ENCODE measurements at regions of chr19 and their contacts with region 1.

Region 1: GRCh38 chr19:46840136-46840942 is 10.3 kb downstream of the AP2S1 start:
- DNase-seq: peak; percentile 51
- ATAC-seq: peak; percentile 33; the same call in 1 of the 2 replicates
- H3K4me3 ChIP-seq: no peak overlapping the region
- H3K27ac ChIP-seq: no peak overlapping the region
- H3K4me1 ChIP-seq: no peaks in the 10 kb centered on the region
- H3K27me3 ChIP-seq: no peaks in the 10 kb centered on the region
- CTCF ChIP-seq: peak; percentile 78

Region 2: DNA sequence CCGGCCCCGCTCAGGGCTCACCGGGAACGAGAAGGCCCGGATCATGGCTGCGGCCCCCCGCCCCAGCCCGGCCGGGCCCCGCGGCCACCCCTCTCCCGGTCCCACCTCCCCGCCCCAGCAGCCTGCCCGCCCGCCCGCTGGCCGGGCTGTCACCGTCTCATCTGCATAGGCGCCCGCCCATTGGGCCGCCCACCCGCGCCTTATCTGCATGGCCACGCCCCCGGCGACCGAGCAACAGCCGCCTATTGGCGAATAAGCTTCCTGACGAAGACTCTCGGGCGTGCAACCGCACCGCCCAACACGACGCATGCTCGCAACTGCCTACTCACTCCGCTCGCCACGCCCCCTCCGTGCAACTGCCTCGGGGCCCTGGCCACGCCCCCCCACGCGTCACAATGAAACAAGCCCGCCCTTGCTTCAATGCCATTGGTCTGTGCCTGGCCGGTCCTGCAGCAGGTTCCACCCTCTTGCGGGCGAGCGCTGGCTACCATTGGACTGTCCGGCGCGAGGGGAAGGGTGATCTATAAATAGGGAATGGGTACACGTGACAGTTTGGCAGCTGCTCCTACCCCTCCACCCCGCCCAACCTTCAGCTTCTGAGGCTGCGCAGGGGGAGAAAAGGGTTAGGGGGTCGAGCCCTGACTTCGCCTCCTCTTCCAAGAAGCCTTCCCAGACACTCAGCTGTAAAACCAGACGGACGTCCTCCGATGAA is 179.2 kb before region 1 on chr19 and contains the start of gene DACT3:
- CTCF ChIA-PET with region 1: no interaction called
- POLR2A ChIA-PET with region 1: no interaction called
- intact Hi-C with region 1: no loop called
- DNase-seq: peak; percentile 97
- ATAC-seq: peak; percentile 95
- H3K4me3 ChIP-seq: peak within 1 kb of the TSS; percentile 66
- H3K27ac ChIP-seq: no peak within 1 kb of the TSS
- H3K4me1 ChIP-seq: peaks cover 9% of the 10 kb centered on the region
- H3K27me3 ChIP-seq: no peaks in the 10 kb centered on the region
- CTCF ChIP-seq: no peak
- total RNA-seq, gene DACT3: 1.9 and 3.1 TPM in 2 replicates

Region 3: DNA sequence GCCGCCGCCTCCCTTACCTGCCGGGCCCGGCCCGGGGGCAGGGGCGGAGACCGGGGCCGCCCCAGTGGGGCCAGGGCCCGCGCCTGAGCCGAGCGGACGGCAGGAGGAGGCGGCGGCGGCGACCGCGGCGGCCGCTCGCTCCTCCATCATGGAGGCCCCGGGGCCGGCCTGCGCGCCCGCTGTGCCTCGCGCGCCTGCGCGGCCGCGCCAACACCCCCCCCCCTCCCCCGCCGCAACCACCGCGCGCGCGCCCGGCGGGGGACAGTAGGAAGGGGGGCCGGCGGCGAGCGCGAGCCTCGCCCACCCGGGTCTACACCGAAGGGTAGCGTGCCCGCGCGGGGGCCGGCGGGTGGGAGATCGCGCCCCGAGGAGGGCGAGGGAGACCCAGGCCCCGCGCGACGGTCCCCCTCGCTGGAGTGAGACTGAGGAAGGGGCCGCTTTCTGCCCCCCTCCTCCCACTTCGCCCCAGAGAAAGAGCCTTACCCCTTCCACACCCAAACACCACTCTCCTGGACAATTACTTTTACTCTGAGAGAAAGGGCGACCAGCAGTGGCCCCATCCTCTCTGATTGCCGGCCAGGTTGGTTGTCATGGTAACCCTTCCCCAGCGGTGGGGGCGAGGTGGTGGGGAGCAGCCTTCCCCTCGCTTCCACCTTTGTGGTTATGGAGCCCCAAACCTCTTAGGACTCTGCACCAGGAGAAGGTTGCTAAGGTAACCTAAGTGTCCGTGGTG is 93.9 kb before region 1 on chr19 and contains the start of gene STRN4:
- CTCF ChIA-PET with region 1: interaction called, 13 read pairs
- POLR2A ChIA-PET with region 1: no interaction called
- intact Hi-C with region 1: no loop called
- DNase-seq: peak; percentile 62
- ATAC-seq: peak; percentile 60
- H3K4me3 ChIP-seq: peak within 1 kb of the TSS; percentile 97
- H3K27ac ChIP-seq: no peak within 1 kb of the TSS
- H3K4me1 ChIP-seq: peaks cover 9% of the 10 kb centered on the region
- H3K27me3 ChIP-seq: no peaks in the 10 kb centered on the region
- CTCF ChIP-seq: no peak
- total RNA-seq, gene STRN4: 62.7 and 83.9 TPM in 2 replicates

Region 4: GRCh38 chr19:46756544-46756888 is 83.8 kb before region 1 on chr19:
- CTCF ChIA-PET with region 1: interaction called, 3 read pairs
- POLR2A ChIA-PET with region 1: no interaction called
- intact Hi-C with region 1: loop called (anchors 2 kb)
- DNase-seq: no peak
- ATAC-seq: no peak
- H3K4me3 ChIP-seq: no peak overlapping the region
- H3K27ac ChIP-seq: no peak overlapping the region
- H3K4me1 ChIP-seq: no peaks in the 10 kb centered on the region
- H3K27me3 ChIP-seq: no peaks in the 10 kb centered on the region
- CTCF ChIP-seq: no peak

Region 5: DNA sequence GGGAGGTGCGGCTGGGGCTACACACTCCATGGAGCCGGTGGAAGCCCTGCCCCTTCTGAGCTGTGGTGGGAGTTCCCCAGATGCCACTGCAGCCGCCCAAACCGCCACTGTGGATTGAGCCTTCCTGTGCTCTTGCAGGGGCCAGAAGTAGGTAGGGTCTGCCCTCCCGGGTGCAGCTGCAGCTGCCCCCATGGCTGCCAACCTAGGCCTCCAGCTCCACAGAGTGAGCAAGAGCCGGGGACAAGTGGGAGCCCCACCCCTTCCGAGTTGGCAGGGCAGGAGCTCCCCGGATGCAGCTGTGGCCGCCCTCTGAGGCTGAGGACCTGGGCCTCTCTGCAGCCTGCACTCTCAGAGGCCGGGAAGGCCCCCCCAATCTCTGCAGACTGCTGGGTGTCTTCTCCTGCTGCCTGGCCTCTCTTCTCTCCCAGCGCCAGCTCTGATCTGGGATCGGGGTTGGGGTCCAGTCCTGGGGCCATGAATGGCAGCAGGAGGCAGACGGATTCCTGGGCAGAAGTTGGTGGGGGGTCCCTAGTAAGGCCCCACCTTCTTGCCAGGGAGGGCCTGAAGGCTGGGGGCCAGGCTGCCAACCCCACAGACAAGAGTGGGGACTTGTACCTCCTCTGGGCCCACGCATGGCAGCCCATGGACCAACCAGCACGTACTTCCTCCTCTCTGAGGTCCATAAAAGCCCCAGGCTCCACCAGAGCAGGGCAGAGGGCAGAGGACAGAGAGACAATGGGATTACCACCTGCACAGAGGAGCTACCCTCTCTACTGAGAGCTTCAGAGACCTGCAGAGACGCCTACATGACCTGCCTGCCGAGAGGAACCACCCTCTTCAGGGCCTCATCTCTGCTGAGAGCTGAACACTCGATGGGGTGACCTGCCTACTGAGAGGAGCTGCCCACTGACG is 18.6 kb before region 1 on chr19:
- CTCF ChIA-PET with region 1: interaction called, 10 read pairs
- POLR2A ChIA-PET with region 1: no interaction called
- intact Hi-C with region 1: no loop called
- DNase-seq: no peak
- ATAC-seq: no peak
- H3K4me3 ChIP-seq: no peak overlapping the region
- H3K27ac ChIP-seq: no peak overlapping the region
- H3K4me1 ChIP-seq: peaks cover 14% of the 10 kb centered on the region
- H3K27me3 ChIP-seq: no peaks in the 10 kb centered on the region
- CTCF ChIP-seq: no peak

Measured in PC-3 (cell line).